ENCODE measurements at regions of chr2 and their contacts with region 1.

Region 1: GRCh38 chr2:43484323-43484930 is 111.4 kb downstream of the THADA start:
- DNase-seq: no peak
- ATAC-seq: no peak
- H3K4me3 Mint-ChIP-seq: no peak overlapping the region
- H3K27ac Mint-ChIP-seq: no peak overlapping the region
- H3K4me1 Mint-ChIP-seq: peaks cover 29% of the 10 kb centered on the region
- H3K27me3 Mint-ChIP-seq: no peaks in the 10 kb centered on the region
- CTCF ChIP-seq: peak; percentile 45

Region 2: GRCh38 chr2:42828487-42829425 is 655.7 kb before region 1 on chr2:
- CTCF ChIA-PET with region 1: interaction called, 11 read pairs
- POLR2A ChIA-PET with region 1: no interaction called
- intact Hi-C with region 1: loop called (anchors 1 kb)
- DNase-seq: peak; percentile 52
- ATAC-seq: peak; percentile 88
- H3K4me3 Mint-ChIP-seq: no peak overlapping the region
- H3K27ac Mint-ChIP-seq: no peak overlapping the region
- H3K4me1 Mint-ChIP-seq: peaks cover 14% of the 10 kb centered on the region
- H3K27me3 Mint-ChIP-seq: no peaks in the 10 kb centered on the region
- CTCF ChIP-seq: peak; percentile 65

Region 3: GRCh38 chr2:42944779-42945415 is 539.5 kb before region 1 on chr2:
- CTCF ChIA-PET with region 1: interaction called, 97 read pairs
- POLR2A ChIA-PET with region 1: interaction called, 6 read pairs
- intact Hi-C with region 1: loop called (anchors 1 kb)
- DNase-seq: no peak
- ATAC-seq: no peak
- H3K4me3 Mint-ChIP-seq: no peak overlapping the region
- H3K27ac Mint-ChIP-seq: no peak overlapping the region
- H3K4me1 Mint-ChIP-seq: peaks cover 32% of the 10 kb centered on the region
- H3K27me3 Mint-ChIP-seq: no peaks in the 10 kb centered on the region
- CTCF ChIP-seq: no peak

Region 4: DNA sequence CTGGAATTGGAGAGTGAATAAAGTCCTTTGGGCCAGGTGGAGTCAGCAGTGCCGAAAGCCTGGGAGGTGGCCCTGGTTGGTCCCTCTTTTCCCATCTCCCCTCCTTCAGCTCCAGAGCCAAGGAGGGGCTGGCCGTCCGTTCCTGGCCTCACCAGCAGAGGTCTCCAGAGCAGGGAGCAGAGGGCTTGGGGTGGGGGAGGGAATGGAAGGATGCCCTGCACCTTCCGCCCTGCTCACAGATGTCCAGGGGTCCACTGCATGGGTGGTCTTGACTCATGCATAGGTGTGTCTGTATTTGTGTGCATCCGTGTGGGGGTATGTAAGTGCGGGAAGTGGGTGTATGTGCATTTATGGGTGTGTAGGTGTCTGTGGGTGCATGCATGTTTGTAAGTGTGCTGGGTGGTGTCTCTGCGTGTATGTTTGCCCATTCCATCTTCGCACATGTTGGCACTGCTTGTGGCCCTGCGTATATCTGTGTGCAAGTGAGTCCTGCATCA is 459.9 kb before region 1 on chr2:
- CTCF ChIA-PET with region 1: interaction called, 16 read pairs
- POLR2A ChIA-PET with region 1: no interaction called
- intact Hi-C with region 1: loop called (anchors 1 kb)
- DNase-seq: peak; percentile 25
- ATAC-seq: peak; percentile 74
- H3K4me3 Mint-ChIP-seq: no peak overlapping the region
- H3K27ac Mint-ChIP-seq: no peak overlapping the region
- H3K4me1 Mint-ChIP-seq: peaks cover 10% of the 10 kb centered on the region
- H3K27me3 Mint-ChIP-seq: peaks cover 2% of the 10 kb centered on the region
- CTCF ChIP-seq: no peak

Region 5: GRCh38 chr2:43542285-43542937 is 58.0 kb after region 1 on chr2:
- CTCF ChIA-PET with region 1: interaction called, 7 read pairs
- POLR2A ChIA-PET with region 1: no interaction called
- intact Hi-C with region 1: loop called (anchors 2 kb)
- DNase-seq: no peak
- ATAC-seq: peak; percentile 40
- H3K4me3 Mint-ChIP-seq: no peak overlapping the region
- H3K27ac Mint-ChIP-seq: no peak overlapping the region
- H3K4me1 Mint-ChIP-seq: peaks cover 18% of the 10 kb centered on the region
- H3K27me3 Mint-ChIP-seq: no peaks in the 10 kb centered on the region
- CTCF ChIP-seq: no peak

Measured in activated B cell treated with CpG ODN at 0.5 μM for 24 hours (primary cell).